Common myeloid progenitor, CD34-positive (primary cell): ENCODE measurements at regions of chr16 and their contacts with region 1.

Region 1: GRCh38 chr16:67137605-67138004 is 13.2 kb downstream of the B3GNT9 start:
- DNase-seq: no peak
- H3K4me3 ChIP-seq: no peak overlapping the region
- H3K27ac ChIP-seq: no peak overlapping the region
- H3K4me1 ChIP-seq: peaks cover 0 to 3% (median 0%) of the 10 kb centered on the region in 4 experiments
- H3K27me3 ChIP-seq: no peaks in the 10 kb centered on the region

Region 2: GRCh38 chr16:67150833-67151396 is 13.3 kb after region 1 on chr16 and contains the start of gene B3GNT9:
- CTCF ChIA-PET with region 1: interaction called, 37 read pairs
- POLR2A ChIA-PET with region 1: interaction called, 4 read pairs
- DNase-seq: peak in 2 of 3 donors; percentile 50 to 77
- H3K4me3 ChIP-seq: peak within 1 kb of the TSS; percentile 29 to 82 (median 56)
- H3K27ac ChIP-seq: no peak within 1 kb of the TSS
- H3K4me1 ChIP-seq: peaks cover 0 to 28% (median 19%) of the 10 kb centered on the region in 4 experiments
- H3K27me3 ChIP-seq: peaks cover 0 to 34% (median 7%) of the 10 kb centered on the region in 5 experiments

Region 3: DNA sequence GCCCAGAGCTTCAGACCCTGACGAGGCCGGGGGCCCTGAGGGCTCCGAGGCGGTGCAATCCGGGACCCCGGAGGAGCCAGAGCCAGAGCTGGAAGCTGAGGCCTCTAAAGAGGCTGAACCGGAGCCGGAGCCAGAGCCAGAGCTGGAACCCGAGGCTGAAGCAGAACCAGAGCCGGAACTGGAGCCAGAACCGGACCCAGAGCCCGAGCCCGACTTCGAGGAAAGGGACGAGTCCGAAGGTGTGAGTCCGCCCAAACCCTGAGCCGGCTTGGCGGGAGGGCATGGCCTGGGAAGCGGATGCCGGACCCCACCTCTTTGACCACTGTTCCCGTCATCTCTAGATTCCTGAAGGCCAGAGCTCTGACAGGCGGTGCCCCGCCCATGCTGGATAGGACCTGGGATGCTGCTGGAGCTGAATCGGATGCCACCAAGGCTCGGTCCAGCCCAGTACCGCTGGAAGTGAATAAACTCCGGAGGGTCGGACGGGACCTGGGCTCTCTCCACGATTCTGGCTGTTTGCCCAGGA is 37.2 kb after region 1 on chr16:
- CTCF ChIA-PET with region 1: no interaction called
- POLR2A ChIA-PET with region 1: no interaction called
- DNase-seq: no peak
- H3K4me3 ChIP-seq: peak overlapping the region in 4 of 7 experiments; percentile 2 to 70 (median 60)
- H3K27ac ChIP-seq: no peak overlapping the region
- H3K4me1 ChIP-seq: peaks cover 0 to 42% (median 35%) of the 10 kb centered on the region in 4 experiments
- H3K27me3 ChIP-seq: peaks cover 4 to 82% (median 47%) of the 10 kb centered on the region in 5 experiments